Activated CD4-positive, alpha-beta T cell treated with anti-CD3 and anti-CD28 coated beads for 36 hours (primary cell): ENCODE measurements at regions of chr11 and their contacts with region 1.

Region 1: DNA sequence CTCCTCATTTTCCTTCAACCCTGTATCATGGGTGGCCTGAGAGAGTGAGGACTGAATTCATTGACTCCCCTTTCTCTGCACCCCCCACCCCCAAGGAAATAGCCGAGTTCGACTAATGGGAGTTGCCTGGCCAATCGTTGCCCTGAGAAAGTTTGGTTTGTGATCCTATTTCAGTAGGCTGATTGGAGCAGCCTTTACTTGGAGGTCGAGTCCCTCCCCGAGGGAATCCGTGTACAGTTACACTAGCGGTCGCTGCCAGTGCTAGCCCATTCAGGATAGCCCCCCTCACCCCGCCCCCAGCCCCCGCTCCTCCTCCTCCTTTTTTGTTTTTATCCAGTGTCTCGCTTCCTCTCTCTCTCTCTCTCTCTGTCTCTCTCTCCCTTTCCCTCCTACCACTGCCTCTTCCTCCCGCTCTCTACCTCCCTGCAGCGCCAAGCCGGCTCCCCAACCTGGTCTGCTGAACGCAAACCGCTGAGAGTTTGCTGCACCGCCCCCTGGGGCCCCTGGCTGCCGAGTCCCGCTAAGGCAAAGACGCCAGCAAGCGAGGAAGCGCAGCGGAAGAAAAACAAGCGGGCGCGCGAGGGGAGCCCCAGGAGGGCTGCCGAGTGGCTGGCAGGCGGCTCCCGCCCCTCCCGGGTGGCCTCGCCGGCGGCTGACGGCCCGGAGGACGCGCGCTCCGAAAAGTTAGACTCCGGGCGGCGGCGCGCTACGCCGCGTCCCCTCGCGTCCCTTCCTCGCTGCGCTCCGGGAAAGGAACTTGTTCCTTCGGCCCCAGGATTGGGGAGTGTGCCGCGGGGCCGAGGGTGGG is at the start of gene GRAMD1B:
- DNase-seq: peak; percentile 90
- ATAC-seq: peak; percentile 68
- H3K4me3 Mint-ChIP-seq: peak within 1 kb of the TSS; percentile 76
- H3K27ac Mint-ChIP-seq: peak within 1 kb of the TSS; percentile 79
- H3K4me1 Mint-ChIP-seq: peaks cover 39% of the 10 kb centered on the region
- H3K27me3 Mint-ChIP-seq: no peaks in the 10 kb centered on the region
- total RNA-seq, gene GRAMD1B: 38.6 to 45.7 TPM

Region 2: DNA sequence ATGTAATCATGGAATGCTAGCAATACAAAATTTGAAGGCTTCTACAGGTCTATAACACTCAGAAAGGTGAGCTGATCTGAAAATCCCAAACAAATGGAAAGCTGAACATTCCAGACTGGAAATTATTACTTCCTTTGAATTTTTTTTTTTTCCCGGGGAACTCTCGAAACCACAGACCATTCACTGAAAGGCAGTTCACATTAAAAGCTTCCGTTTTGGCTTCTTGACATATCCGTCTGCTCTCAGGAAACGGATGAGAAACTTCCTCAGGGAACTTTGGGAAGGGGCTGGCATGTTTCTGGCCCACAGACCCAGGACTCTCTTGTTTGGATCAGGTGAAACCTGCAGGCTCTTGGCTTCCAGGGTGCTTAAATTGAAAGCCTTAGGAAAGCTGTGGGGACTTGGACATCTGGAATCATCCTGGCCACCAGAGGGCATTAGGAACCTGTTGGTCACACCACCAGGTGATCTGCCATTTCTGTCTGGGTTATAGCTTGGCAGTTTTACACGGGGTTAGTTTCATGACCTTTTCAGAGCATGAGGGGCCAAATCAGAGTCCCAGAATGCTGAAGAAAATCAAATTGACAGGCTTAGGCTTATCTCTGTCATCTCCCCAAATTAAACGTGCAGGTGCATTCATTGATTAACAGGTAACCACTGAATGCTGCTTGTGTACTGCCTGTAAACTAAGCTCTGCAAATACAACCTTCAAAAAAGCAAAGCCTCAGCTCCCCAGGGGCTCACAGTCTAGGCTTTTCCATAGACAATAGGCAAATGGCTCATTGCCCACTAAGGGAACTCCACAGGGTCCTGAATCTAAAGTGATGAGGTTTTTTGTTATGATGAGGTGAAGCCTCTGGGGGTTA is 22.8 kb before region 1 on chr11:
- CTCF ChIA-PET with region 1: interaction called, 18 read pairs
- POLR2A ChIA-PET with region 1: no interaction called
- intact Hi-C with region 1: loop called in 1 of 2 experiments (anchors 1 kb)
- DNase-seq: peak; percentile 79
- ATAC-seq: peak; percentile 74
- H3K4me3 Mint-ChIP-seq: peak overlapping the region; percentile 33
- H3K27ac Mint-ChIP-seq: peak overlapping the region; percentile 63
- H3K4me1 Mint-ChIP-seq: peaks cover 26% of the 10 kb centered on the region
- H3K27me3 Mint-ChIP-seq: peaks cover 5% of the 10 kb centered on the region

Region 3: GRCh38 chr11:123443851-123444598 is 13.9 kb after region 1 on chr11:
- CTCF ChIA-PET with region 1: interaction called, 33 read pairs
- POLR2A ChIA-PET with region 1: no interaction called
- intact Hi-C with region 1: no loop called
- DNase-seq: no peak
- ATAC-seq: no peak
- H3K4me3 Mint-ChIP-seq: no peak overlapping the region
- H3K27ac Mint-ChIP-seq: no peak overlapping the region
- H3K4me1 Mint-ChIP-seq: peaks cover 37% of the 10 kb centered on the region
- H3K27me3 Mint-ChIP-seq: no peaks in the 10 kb centered on the region

Region 4: DNA sequence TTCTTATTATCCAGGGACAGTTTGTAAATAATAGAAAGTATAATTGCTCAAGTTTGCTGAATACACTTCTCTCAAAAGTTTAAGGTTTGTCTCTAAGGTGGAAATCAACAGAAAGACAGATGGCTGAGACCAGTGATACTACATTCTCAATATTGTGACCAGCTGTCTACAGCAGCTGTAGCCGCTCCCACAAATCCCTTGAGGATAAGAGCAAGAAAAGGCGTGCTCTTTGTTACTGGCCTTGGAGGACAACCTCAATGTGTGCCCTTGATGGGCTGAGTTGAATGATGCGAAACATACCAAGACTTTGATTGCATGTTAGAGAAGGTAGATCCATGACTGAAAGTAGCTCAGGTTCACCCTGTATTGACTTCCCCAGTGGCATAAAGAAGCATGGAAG is 369.9 kb after region 1 on chr11:
- CTCF ChIA-PET with region 1: no interaction called
- POLR2A ChIA-PET with region 1: no interaction called
- intact Hi-C with region 1: no loop called
- DNase-seq: no peak
- ATAC-seq: no peak
- H3K4me3 Mint-ChIP-seq: no peak overlapping the region
- H3K27ac Mint-ChIP-seq: no peak overlapping the region
- H3K4me1 Mint-ChIP-seq: no peaks in the 10 kb centered on the region
- H3K27me3 Mint-ChIP-seq: no peaks in the 10 kb centered on the region